ENCODE measurements at regions of chr12 and their contacts with region 1.

Region 1: DNA sequence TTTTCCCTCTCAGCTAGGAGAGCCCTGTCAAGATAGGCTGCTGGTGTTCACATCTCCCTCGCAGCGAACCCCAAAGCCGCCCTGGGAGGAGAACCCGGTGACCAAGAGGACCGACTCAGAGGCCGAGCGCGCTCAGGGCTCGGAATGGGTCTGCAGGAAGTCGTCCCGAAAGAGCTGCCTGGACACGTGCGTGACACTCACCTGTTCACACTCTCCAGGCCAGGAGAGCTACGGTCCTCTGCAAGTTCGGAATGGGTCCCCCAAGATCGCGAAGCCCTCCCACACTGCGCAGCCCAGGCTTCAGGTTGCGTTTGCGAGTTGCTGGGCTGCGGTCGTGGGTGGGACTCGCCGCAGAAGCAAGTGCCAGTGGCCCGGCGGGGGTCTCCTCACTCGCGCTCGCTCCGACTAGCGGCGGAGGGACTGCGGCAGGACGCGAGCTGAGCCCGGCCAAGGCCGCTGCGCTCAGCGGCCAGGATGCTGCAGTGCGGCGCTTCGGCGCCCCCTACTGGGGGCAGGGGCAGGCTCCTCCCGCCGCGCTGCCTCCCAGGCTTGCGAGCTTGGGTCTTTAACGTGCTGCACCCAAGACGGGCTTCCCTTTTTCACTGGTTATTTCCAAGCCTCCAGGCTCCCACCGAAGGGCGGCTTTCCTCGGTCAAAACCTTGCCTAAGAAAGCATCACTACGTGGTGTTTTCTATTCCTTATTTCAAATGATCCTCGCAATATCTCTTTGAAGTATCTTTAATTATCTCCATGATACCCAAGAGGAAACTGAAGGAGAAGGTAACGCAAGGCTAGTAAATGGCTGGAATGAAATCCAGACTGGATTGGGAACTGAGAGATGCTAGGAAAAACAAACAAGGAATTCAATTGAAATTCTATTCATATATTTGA is at the start of gene RERG:
- DNase-seq: peak; percentile 44 to 87
- H3K4me3 ChIP-seq: peak within 1 kb of the TSS; percentile 41; the same call in 1 of the 2 replicates
- H3K27ac ChIP-seq: no peak within 1 kb of the TSS
- H3K4me1 ChIP-seq: 0 out of 2 replicates have a peak, but pooled peaks cover 6% of the 10 kb centered on the region
- H3K27me3 ChIP-seq: no peaks in the 10 kb centered on the region
- CTCF ChIP-seq: peak; percentile 85
- total RNA-seq, gene RERG: 0.50 and 1.4 TPM in 2 replicates

Region 2: DNA sequence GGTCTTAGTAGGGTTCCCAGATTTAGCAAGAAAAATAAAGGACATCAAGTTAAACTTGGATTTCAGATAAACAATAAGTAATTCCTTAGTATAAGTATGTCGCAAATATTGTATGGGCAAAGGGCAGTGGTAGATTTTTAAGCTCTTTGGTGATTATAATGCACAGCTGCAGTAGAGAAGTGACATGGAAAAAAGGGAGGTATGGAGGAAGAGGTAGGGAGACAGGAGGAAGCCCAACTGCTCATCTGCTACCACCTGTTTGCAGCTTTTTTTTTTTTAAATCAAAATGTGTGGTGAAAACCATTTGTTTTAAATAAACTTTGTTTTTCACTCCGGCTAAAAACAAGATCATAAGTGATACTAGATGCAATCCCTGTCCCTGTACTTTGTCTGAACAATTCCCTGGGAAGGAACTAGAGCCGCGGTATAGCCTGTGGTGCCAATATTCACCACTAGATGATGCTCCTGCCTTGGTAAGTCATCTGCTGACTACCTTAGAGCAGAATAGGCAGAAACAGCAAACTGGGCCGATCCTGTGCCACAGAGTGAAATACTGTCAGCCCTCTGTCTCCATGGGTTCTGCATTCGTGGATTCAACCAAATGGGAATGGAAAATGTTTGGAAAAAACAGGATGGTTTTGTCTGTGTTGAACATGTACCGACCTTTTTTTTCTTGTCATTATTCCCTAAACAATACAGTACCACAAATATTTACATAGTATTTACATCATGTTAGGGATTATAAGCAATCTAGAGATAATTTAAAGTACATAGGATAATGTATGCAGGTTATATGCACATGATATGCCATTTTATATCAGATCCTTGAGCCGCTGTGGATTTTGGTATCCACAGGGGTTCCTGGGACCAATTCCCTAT is 591.2 kb before region 1 on chr12:
- CTCF ChIA-PET with region 1: no interaction called
- POLR2A ChIA-PET with region 1: no interaction called
- intact Hi-C with region 1: loop called (anchors 5 kb)
- DNase-seq: peak; percentile 51 to 75
- H3K4me3 ChIP-seq: no peak overlapping the region
- H3K27ac ChIP-seq: no peak overlapping the region
- H3K4me1 ChIP-seq: no peaks in the 10 kb centered on the region
- H3K27me3 ChIP-seq: no peaks in the 10 kb centered on the region
- CTCF ChIP-seq: peak; percentile 94

Region 3: DNA sequence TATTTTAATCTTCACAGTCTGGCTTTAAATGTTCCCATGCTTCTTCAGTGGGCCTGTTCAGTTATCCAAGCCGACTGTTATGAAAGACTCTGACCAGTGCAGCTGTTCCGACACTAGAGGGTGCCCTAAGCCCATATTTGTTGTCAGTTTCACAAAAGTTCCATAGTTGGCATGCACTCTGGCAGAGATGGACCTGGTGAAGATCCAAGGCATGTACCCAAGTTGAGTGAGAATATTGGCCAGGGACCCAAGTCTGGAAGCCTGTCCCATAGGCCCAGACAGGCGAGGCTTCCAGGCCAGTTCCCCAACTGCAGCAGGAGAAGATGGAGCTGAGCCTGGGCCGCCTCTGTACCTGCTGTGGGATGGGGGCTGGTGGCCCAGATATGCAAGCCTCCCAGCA is 497.5 kb before region 1 on chr12:
- CTCF ChIA-PET with region 1: interaction called, 7 read pairs
- POLR2A ChIA-PET with region 1: no interaction called
- intact Hi-C with region 1: loop called (anchors 5 kb)
- DNase-seq: peak; percentile 36 to 50
- H3K4me3 ChIP-seq: no peak overlapping the region
- H3K27ac ChIP-seq: no peak overlapping the region
- H3K4me1 ChIP-seq: no peaks in the 10 kb centered on the region
- H3K27me3 ChIP-seq: no peaks in the 10 kb centered on the region
- CTCF ChIP-seq: peak; percentile 83

Region 4: DNA sequence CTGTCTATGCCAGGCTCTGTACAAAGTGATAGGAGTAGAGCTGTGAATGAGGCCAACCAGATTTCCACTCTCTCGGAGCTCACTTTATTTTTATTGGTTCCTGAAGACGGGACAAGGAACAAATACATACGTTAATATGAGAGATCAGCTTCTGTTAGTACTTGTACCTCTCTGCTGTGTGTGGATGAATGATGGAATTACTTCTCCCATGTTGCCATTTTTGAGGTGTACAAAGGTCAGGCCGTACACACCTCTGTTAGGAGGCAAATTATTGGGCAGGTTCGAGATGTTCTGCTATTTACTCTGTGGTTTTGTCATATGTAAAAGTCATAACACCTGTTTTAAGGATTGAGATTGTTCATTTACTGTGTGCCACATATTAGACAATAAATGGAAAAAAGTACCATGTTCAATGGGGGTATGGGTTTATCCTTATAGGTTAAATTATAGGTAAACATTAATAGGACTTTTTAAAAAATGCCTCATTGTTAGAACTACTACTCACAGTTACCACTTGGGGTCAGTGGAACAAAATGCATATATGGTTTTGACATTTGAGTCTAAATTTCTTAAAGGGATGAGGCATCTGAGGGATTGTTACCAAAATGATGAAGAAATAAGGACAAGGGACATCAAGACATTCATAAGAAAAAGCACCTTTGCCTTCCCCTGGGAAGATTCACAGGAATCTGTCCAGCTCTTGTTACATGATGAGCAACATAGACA is 444.8 kb before region 1 on chr12:
- CTCF ChIA-PET with region 1: no interaction called
- POLR2A ChIA-PET with region 1: no interaction called
- intact Hi-C with region 1: loop called (anchors 1 kb)
- DNase-seq: peak in 1 of 2 experiments; percentile 49
- H3K4me3 ChIP-seq: peak overlapping the region; percentile 91
- H3K27ac ChIP-seq: peak overlapping the region; percentile 89
- H3K4me1 ChIP-seq: peaks cover 41% of the 10 kb centered on the region
- H3K27me3 ChIP-seq: no peaks in the 10 kb centered on the region
- CTCF ChIP-seq: peak; percentile 46; the same call in 1 of the 2 replicates

Region 5: GRCh38 chr12:14795028-14795448 is 426.2 kb before region 1 on chr12:
- CTCF ChIA-PET with region 1: no interaction called
- POLR2A ChIA-PET with region 1: interaction called, 13 read pairs
- intact Hi-C with region 1: no loop called
- DNase-seq: no peak
- H3K4me3 ChIP-seq: no peak overlapping the region
- H3K27ac ChIP-seq: no peak overlapping the region
- H3K4me1 ChIP-seq: no peaks in the 10 kb centered on the region
- H3K27me3 ChIP-seq: no peaks in the 10 kb centered on the region
- CTCF ChIP-seq: no peak

Region 6: DNA sequence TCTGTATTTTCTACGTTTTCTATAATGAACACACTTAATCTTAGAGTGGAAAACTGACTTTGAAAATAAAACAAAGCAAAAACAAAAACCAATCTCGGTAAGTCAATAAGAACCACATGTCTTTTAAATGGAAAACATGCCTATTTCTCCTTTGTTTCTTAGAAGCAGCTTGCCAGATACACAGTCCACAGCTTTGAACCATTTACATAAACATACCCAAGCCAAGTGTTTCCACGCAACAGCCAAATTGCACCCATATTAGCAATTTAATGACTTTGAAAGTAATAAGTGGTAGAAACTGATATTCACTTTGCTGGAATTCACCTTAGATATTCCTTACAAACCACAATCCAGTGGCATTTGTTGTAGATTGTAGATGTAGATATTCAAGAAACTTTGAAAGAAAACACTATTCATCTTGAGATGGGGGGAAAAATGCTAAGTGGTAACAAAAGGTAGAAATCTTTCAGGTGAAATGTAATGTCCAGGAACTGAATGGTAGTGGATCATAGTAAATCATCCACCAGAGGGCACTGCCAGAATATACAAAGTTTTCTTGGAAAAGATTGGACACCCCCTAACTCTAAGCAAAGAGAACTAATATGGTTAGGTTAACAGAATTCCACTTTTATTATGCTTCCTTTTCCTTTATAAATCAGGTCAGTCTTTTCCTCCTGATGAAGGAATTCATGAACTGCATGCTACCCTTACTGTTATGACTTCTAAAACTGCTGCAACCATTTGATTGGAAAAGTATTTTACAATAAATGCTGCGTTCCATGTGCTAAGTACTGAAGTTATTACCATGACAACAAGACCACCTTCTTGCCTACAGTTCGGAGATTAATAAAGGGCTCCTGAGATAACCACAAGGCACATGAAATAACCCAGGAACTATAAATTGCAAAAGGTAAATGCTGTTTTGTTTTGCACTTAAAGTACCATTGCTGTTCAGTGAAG is 69.8 kb before region 1 on chr12:
- CTCF ChIA-PET with region 1: interaction called, 9 read pairs
- POLR2A ChIA-PET with region 1: interaction called, 6 read pairs
- intact Hi-C with region 1: loop called (anchors 1 kb)
- DNase-seq: no peak
- H3K4me3 ChIP-seq: no peak overlapping the region
- H3K27ac ChIP-seq: no peak overlapping the region
- H3K4me1 ChIP-seq: peaks cover 19% of the 10 kb centered on the region
- H3K27me3 ChIP-seq: no peaks in the 10 kb centered on the region
- CTCF ChIP-seq: peak; percentile 73

Region 7: GRCh38 chr12:15268927-15269552 is 47.8 kb after region 1 on chr12:
- CTCF ChIA-PET with region 1: no interaction called
- POLR2A ChIA-PET with region 1: no interaction called
- intact Hi-C with region 1: loop called (anchors 2 kb)
- DNase-seq: peak; percentile 53 to 63
- H3K4me3 ChIP-seq: no peak overlapping the region
- H3K27ac ChIP-seq: no peak overlapping the region
- H3K4me1 ChIP-seq: 0 out of 2 replicates have a peak, but pooled peaks cover 2% of the 10 kb centered on the region
- H3K27me3 ChIP-seq: no peaks in the 10 kb centered on the region
- CTCF ChIP-seq: peak; percentile 92